Head of caudate nucleus (tissue), 42 donors: ENCODE measurements at regions of chr12 and their contacts with region 1.

Region 1: DNA sequence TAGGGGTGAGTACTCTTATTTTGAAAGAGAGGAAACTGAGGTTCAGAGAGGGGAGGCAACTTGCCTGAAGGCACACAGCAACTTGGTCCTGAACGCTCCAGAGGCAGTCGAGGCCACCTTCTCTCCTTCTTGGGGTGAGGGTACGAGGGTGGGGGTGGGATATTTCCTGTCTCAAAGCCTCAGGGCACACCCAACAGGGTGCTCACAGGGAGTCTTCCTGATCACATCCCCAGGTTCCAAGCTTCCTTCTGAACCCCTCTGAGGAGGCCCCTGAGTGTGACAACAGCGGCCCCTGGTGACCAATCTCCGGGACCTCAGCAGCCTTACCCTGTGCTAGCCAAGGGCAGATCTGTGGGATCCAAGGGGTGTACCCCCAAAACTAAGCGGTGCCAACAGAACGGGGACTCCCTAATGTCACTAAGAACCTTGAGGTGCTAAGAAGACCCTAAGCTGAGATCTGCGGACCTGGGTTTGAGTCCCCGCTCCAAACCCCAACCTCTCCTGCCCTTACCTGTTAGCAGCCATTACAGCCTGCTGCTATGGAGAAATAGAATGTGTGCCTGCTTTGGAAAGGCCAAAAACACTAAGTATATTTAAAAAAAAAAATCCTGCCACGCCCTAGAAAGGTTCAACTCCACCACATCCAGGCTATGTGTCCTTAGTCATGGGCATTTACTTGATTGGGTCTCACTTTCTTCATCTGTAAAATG is 57.9 kb downstream of the TRPV4 start:
- DNase-seq: peak; percentile 71 to 95 (median 88)

Region 2: GRCh38 chr12:109523071-109523470 is 252.3 kb before region 1 on chr12:
- intact Hi-C with region 1: loop called (anchors 5 kb)
- DNase-seq: peak in 34 of 42 donors; percentile 34 to 83 (median 56)

Region 3: GRCh38 chr12:109597795-109598427 is 177.4 kb before region 1 on chr12:
- intact Hi-C with region 1: loop called (anchors 2 kb)
- DNase-seq: peak; percentile 85 to 97 (median 93)

Region 4: GRCh38 chr12:109982210-109982609 is 206.9 kb after region 1 on chr12:
- intact Hi-C with region 1: no loop called
- DNase-seq: no peak